Activated CD4-positive, alpha-beta T cell treated with anti-CD3 and anti-CD28 coated beads, Interleukin-2, amount 10 ng/mL, durations not matched to agents 24 days and 14 days (primary cell): ENCODE measurements at regions of chrX and their contacts with region 1.

Region 1: GRCh38 chrX:154013614-154014360 is 5.9 kb downstream of the IRAK1 start:
- DNase-seq: peak; percentile 83
- H3K4me3 Mint-ChIP-seq: no peak overlapping the region
- H3K27ac Mint-ChIP-seq: peak overlapping the region; percentile 53
- H3K4me1 Mint-ChIP-seq: peaks cover 4% of the 10 kb centered on the region
- H3K27me3 Mint-ChIP-seq: no peaks in the 10 kb centered on the region

Region 2: GRCh38 chrX:154051201-154051810 is 37.5 kb after region 1 on chrX:
- intact Hi-C with region 1: loop called (anchors 5 kb)
- DNase-seq: peak; percentile 89
- H3K4me3 Mint-ChIP-seq: no peak overlapping the region
- H3K27ac Mint-ChIP-seq: peak overlapping the region; percentile 65
- H3K4me1 Mint-ChIP-seq: peaks cover 17% of the 10 kb centered on the region
- H3K27me3 Mint-ChIP-seq: no peaks in the 10 kb centered on the region